OCI-LY7 (cell line): ENCODE measurements at regions of chr15 and their contacts with region 1.

Region 1: DNA sequence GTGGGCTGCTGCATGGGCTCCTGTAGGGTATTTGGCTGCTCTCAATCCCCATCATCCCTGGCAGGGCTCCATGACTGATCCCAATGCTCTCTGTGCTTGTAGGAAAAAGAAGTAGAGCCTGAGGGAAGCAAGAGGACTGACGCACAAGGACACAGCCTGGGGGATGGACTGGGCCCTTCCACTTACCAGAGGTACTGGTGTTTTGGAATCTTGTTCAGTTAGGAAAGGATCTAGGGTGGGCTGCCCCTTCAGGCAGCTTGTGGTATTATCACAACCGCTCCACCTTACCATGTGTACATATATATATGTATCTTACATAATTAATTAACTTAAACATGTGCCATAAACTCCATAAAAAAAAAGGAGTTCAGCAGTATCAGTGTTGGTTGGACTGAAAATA is 1.3 kb downstream of the SLC28A2 start:
- DNase-seq: peak; percentile 14
- H3K4me3 ChIP-seq: no peak overlapping the region
- H3K27ac ChIP-seq: no peak overlapping the region
- H3K4me1 ChIP-seq: no peaks in the 10 kb centered on the region
- CTCF ChIP-seq: peak; percentile 72

Region 2: GRCh38 chr15:45162771-45163526 is 90.4 kb before region 1 on chr15:
- CTCF ChIA-PET with region 1: no interaction called
- POLR2A ChIA-PET with region 1: no interaction called
- intact Hi-C with region 1: no loop called
- DNase-seq: peak; percentile 81
- H3K4me3 ChIP-seq: no peak overlapping the region
- H3K27ac ChIP-seq: no peak overlapping the region
- H3K4me1 ChIP-seq: peaks cover 14% of the 10 kb centered on the region
- CTCF ChIP-seq: peak; percentile 89

Region 3: GRCh38 chr15:45221967-45222366 is 31.4 kb before region 1 on chr15:
- CTCF ChIA-PET with region 1: no interaction called
- POLR2A ChIA-PET with region 1: interaction called, 3 read pairs
- intact Hi-C with region 1: loop called (anchors 5 kb)
- DNase-seq: no peak
- H3K4me3 ChIP-seq: no peak overlapping the region
- H3K27ac ChIP-seq: no peak overlapping the region
- H3K4me1 ChIP-seq: no peaks in the 10 kb centered on the region
- CTCF ChIP-seq: no peak